Sigmoid colon (tissue), 7 donors: ENCODE measurements at regions of chrX and their contacts with region 1.

Region 1: DNA sequence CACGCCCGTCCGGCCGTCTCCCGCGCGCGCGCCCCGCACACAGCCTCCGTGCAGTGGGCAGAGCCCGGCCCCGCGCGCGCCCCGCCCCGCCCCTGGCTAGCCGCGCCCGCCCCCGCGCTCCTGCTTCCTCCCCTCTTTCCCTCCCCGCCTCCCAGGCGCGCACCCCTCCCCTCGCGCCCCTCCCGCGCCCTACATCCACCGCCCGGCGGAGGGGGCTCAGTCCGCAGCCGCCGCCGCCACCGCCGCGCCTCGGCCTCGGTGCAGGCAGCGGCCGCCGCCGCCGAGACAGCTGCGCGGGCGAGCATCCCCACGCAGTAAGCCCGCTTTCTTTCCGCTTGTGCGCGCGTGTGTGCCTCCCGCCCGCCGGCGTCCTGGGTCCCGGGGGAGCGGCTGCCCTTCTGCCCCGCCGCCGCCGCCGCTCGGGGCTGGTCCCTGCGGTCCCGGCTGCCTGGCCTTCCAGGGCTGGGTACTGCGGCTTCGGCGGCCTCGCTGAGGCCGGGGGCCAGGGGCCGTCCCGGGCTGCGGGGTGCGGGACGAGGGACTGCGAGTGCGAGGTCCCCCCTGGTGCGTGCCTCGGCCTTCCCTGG is at the start of gene FHL1:
- DNase-seq: peak; percentile 90
- H3K4me3 ChIP-seq: peak within 1 kb of the TSS; percentile 71 to 88 (median 80)
- H3K27ac ChIP-seq: peak within 1 kb of the TSS; percentile 94 to 99 (median 97)
- H3K4me1 ChIP-seq: peaks cover 0 to 8% (median 0%) of the 10 kb centered on the region in 4 donors
- H3K27me3 ChIP-seq: no peaks in the 10 kb centered on the region
- CTCF ChIP-seq: no peak
- EP300 ChIP-seq: no peak
- POLR2A ChIP-seq: no peak
- total RNA-seq, gene FHL1: 701 to 1,465 (median 1,246) TPM

Region 2: DNA sequence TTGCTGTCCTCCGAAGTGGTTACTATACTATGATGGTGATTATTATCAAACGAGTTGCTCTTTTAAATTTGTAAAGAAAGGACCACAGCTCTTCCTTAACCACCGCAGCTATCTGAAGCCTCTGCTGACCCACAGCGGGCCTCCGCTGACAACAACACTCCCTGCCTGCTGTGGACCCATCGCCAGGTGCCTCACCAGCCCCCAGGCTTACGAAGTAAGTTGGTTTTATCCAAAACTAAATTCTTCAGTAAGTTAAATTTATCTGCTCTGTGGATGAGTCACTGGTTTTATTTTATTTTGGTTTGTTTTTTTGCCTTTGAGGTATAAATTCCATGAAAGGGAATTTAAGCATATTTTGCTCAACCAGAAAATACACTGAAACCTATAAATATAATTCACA is 107.4 kb before region 1 on chrX:
- intact Hi-C with region 1: no loop called
- DNase-seq: no peak
- H3K4me3 ChIP-seq: no peak overlapping the region
- H3K27ac ChIP-seq: no peak overlapping the region
- H3K4me1 ChIP-seq: peaks cover 0 to 5% (median 0%) of the 10 kb centered on the region in 4 donors
- H3K27me3 ChIP-seq: no peaks in the 10 kb centered on the region
- CTCF ChIP-seq: no peak
- EP300 ChIP-seq: no peak
- POLR2A ChIP-seq: no peak

Region 3: DNA sequence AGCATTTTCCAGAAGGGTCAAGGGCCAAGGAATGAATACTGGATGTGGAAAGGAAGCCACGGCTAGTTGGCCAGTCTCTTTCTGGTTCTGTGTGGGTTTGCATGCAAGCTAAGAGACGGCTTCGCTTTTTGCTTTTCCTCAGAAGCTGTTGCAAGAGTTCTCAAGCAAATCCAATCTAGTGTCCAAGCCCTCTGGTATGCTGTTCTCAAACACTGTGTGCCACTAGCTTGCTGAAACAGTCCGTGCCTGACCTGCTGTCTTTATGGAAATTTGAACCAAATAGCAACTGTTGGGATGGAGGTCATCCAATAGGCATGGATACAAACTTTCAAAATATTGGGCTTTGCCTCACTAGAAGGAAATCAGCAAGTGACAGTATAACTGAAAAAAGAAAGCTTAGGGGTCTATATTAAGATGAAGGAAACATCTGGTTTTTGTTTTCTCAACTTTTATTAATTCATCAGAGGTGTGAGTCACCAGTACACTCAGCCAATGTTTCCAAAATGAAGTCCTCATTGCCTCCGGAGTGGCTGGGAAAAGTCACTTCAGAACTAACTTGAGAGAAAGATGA is 91.7 kb before region 1 on chrX:
- intact Hi-C with region 1: loop called (anchors 5 kb)
- DNase-seq: peak; percentile 91
- H3K4me3 ChIP-seq: peak overlapping the region in 2 of 4 donors; percentile 10 to 11
- H3K27ac ChIP-seq: peak overlapping the region; percentile 82 to 88 (median 87)
- H3K4me1 ChIP-seq: peaks cover 0 to 35% (median 15%) of the 10 kb centered on the region in 4 donors
- H3K27me3 ChIP-seq: no peaks in the 10 kb centered on the region
- CTCF ChIP-seq: no peak
- EP300 ChIP-seq: peak; percentile 78 to 98 (median 83)
- POLR2A ChIP-seq: peak in 1 of 2 donors; percentile 34

Region 4: DNA sequence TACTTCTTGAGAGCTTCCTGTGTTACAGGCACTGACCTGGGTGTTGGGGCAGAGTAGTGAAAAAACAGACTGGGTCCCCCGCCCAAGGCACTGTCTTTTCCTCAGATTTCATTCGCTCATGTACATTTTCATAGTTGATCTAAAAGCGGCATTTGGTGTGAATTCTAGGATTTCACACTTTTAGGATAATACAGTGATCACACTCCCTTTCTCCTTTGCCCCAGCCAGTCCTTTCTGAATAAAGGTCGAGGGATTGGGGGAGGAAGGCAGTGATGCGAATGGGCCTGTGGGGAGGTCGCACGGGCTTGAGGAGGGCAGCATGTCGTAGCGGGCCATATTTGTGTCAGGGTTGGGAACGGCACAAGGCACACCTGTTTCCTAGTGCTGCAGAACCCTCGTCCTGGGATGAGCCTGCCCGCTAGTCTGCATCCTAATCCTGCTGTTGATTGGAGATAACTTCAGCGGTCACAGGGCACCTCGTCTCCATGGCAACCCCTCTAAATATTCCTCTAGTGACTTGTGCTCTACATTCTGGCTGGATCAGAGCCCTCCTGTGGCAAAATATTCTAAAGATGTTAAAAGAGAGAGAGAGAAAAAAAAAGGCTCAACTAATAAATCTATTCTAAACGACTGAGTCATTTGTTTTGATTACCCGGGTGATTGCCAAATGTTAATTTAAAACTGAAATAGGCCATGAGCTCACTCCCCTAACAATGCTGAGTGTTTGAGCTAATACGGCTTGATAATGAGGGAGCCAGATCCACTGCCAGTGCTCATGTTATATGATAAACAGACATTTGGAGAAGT is 21.7 kb after region 1 on chrX:
- intact Hi-C with region 1: no loop called
- DNase-seq: peak; percentile 90
- H3K4me3 ChIP-seq: no peak overlapping the region
- H3K27ac ChIP-seq: peak overlapping the region; percentile 94 to 99 (median 97)
- H3K4me1 ChIP-seq: peaks cover 0 to 83% (median 52%) of the 10 kb centered on the region in 4 donors
- H3K27me3 ChIP-seq: no peaks in the 10 kb centered on the region
- CTCF ChIP-seq: no peak
- EP300 ChIP-seq: peak in 3 of 4 donors; percentile 42 to 78 (median 77)
- POLR2A ChIP-seq: no peak

Region 5: DNA sequence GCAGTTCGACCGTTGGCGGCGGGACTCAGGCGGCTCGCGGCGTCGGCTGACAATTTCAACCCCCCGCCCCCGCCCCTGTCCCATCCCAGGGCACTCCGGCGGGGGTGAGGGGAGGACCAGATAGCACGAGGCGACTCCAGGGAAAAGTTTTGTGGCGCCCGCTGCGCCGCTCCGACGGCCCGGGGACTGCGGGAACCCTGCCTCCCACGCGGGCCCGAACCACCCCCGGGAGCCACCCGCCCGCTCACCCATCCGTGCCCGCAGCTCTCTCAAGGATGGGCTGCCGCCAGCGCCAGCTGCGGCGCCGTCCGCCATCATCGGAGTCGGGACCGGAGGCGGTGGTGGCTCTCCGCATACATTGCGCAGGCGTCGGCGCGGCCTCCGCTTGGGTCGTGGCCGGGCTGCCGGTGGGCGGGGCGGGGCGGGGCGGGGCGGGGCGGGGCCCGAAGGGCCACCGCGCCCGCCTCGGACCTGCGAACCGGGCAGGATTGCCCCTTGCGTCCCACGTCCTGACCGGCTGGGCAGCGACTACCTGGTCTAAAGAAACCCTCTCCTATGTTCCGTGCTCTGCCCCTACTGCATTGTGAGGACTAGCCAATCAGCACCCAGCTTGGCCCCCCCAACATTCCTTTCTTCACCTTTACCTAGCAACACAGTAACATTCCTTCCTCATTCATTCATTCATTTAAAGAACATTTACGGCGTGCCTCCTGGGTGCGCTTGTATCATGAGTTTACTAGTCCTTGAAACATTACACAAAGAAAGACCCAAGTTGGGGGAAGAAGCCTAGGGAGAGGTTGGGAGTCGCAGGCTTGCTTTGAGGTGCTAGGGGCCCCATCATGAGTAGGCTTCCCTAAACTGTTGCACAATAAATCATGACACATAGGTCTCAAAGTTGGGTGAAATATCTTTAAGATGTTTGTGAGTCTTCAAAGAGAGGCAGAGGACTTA is 103.9 kb after region 1 on chrX and contains the start of gene MAP7D3:
- intact Hi-C with region 1: loop called (anchors 5 kb)
- DNase-seq: peak; percentile 82
- H3K4me3 ChIP-seq: peak within 1 kb of the TSS; percentile 64 to 79 (median 74)
- H3K27ac ChIP-seq: peak within 1 kb of the TSS; percentile 86 to 91 (median 89)
- H3K4me1 ChIP-seq: peaks cover 0 to 7% (median 0%) of the 10 kb centered on the region in 4 donors
- H3K27me3 ChIP-seq: no peaks in the 10 kb centered on the region
- CTCF ChIP-seq: no peak
- EP300 ChIP-seq: no peak
- POLR2A ChIP-seq: peak; percentile 18
- total RNA-seq, gene MAP7D3: 11.3 to 21.0 (median 14.2) TPM